Mammary epithelial cell (primary cell): ENCODE measurements at regions of chr7 and their contacts with region 1.

Region 1: GRCh38 chr7:5647816-5648215 is 133.6 kb downstream of the RNF216 start:
- DNase-seq: no peak
- H3K4me3 ChIP-seq: no peak overlapping the region
- H3K27ac ChIP-seq: peak overlapping the region; percentile 96
- H3K4me1 ChIP-seq: peaks cover 27% of the 10 kb centered on the region
- H3K27me3 ChIP-seq: no peaks in the 10 kb centered on the region
- CTCF ChIP-seq: no peak

Region 2: DNA sequence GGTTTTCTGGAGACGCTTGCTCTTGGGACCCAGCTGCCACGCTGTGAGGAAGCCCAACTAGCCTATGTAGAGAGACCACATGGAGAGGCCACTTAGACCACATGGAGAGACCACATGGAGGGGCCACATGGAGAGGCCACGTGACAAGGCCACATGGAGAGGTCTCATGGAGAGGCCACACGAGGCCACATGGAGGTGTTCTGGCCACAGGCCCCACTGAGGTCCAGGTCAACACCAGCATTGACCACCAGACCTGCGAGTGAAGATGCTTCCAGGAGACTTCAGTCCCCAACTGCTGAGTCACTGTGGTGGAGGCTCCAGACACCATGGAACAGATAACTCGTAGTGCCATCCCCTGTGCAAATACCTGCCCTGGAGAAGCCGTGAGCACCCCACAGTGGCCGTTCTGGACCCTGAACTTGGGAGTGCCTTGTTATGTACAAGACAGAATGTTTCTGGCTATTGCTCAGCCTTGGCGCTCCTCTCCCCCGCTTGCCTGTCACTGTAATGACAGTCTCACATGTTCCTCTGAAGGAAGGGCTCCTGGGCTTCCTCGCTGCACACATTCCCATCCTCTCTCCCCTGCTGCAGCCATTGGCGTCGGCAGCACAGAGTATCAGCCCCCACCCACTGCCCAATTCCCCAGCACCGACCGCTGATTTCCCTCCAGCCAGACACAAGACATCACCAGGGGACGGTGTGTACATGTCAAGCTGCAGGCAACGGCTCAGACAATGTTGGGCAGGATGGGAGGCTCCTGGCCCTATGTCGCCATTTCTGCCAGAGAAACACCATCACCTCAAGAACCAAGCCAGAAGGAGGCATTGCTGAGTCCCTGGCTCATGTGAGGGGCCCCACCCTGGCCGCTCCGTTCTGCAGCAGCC is 175.1 kb before region 1 on chr7:
- CTCF ChIA-PET with region 1: no interaction called
- dilution Hi-C with region 1: no loop called
- in situ Hi-C with region 1: no loop called
- intact Hi-C with region 1: no loop called
- DNase-seq: no peak
- H3K4me3 ChIP-seq: no peak overlapping the region
- H3K27ac ChIP-seq: no peak overlapping the region
- H3K4me1 ChIP-seq: peaks cover 5% of the 10 kb centered on the region
- H3K27me3 ChIP-seq: no peaks in the 10 kb centered on the region
- CTCF ChIP-seq: peak in 1 of 2 donors; percentile 5

Region 3: GRCh38 chr7:5543361-5543760 is 104.5 kb before region 1 on chr7:
- CTCF ChIA-PET with region 1: interaction called, 11 read pairs
- dilution Hi-C with region 1: no loop called
- in situ Hi-C with region 1: no loop called
- intact Hi-C with region 1: no loop called
- DNase-seq: no peak
- H3K4me3 ChIP-seq: no peak overlapping the region
- H3K27ac ChIP-seq: no peak overlapping the region
- H3K4me1 ChIP-seq: no peaks in the 10 kb centered on the region
- H3K27me3 ChIP-seq: no peaks in the 10 kb centered on the region
- CTCF ChIP-seq: no peak